Activated T-helper 1 cell treated with anti-CD3 and anti-CD28 coated beads, Interleukin-12 subunit alpha, Interleukin-12 subunit beta, Interleukin-2, Interleukin-4 antibody, amounts not matched to agents 30 ng/mL and 10 ng/mL and 1 ng/mL, durations not matched to agents 14 hours and 24 hours and 36 hours (primary cell): ENCODE measurements at regions of chr20 and their contacts with region 1.

Region 1: GRCh38 chr20:354298-355064 is 7.6 kb downstream of the NRSN2 start:
- DNase-seq: peak; percentile 77
- H3K4me3 Mint-ChIP-seq: no peak overlapping the region
- H3K27ac Mint-ChIP-seq: no peak overlapping the region
- H3K4me1 Mint-ChIP-seq: peaks cover 18% of the 10 kb centered on the region
- H3K27me3 Mint-ChIP-seq: no peaks in the 10 kb centered on the region

Region 2: DNA sequence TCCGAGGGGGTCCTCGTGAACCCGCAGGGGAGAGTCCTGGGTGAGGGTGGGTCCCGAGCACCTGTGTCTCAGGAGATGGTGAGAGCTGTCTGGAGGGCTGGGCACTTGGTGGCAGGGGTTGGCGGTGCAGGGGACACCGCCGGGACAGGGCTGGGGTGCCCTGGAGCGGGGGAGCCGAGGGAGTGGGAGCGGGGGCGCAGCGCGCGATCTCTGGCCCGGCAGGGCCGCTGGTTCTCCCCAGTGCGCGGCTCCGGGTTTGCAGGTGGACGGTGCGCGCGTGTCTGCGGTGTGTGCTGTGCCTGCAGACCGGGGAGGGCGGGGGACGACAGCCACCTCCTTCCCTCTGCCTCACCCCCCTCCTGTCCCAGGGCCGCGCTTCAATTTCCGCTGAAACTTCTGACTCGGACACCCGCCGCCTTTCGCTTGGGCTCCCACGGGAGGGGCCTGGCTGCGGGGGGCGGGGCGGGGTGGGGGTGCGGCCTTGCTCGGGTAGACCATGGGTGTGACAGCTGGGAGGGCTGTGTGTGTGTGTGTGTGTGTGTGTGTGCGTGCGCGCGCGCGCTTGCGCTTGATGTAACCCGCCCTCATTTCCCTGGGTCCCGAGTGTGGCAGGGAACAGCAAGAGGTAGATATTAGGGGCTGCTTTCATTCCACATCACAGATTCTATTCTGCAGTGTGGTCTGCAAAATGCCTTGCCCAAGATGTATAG is 27.3 kb after region 1 on chr20:
- intact Hi-C with region 1: loop called (anchors 1 kb)
- DNase-seq: peak; percentile 75
- H3K4me3 Mint-ChIP-seq: peak overlapping the region; percentile 81
- H3K27ac Mint-ChIP-seq: peak overlapping the region; percentile 68
- H3K4me1 Mint-ChIP-seq: peaks cover 22% of the 10 kb centered on the region
- H3K27me3 Mint-ChIP-seq: peaks cover 3% of the 10 kb centered on the region

Region 3: DNA sequence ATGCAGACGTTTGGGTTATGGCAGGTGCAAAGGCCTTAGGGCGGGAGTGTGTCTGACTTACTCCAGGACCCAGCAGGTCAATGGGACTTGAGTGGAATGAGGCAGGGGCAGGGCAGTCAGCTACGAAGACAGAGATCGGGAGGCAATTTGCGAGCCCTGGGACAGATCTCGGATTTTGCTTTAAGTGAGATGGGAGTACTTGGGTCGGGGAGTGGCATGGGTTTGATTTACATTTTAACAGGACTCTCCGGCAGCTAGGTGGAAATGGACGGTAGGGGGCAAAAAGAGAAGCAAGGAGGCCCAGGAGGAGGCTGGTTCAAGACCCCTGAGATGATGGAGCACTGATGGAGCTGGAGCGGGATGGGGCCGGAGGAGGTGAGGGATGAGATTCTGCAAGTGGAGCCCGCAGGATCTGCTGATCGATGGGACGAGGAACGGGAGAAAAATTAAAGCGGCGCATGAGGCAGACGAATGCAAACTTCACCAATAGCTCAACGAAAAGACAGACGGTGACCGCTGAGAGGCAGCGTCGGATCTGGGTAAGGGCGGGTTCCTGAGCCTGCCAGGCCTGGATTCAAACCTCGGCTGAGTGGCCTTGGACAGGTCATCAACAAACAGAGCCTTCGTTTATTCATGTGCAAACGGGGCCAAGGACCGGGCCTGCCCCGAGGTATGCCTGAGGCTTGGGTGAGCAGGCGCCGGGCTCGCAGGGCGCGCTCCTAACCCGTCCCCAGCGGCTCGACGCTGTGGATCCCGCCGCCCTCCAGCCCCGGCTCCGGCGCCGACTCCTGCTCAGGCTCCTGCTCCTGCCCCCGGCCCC is 52.9 kb after region 1 on chr20:
- intact Hi-C with region 1: loop called (anchors 1 kb)
- DNase-seq: peak; percentile 59
- H3K4me3 Mint-ChIP-seq: peak overlapping the region; percentile 86
- H3K27ac Mint-ChIP-seq: peak overlapping the region; percentile 95
- H3K4me1 Mint-ChIP-seq: peaks cover 47% of the 10 kb centered on the region
- H3K27me3 Mint-ChIP-seq: no peaks in the 10 kb centered on the region

Region 4: GRCh38 chr20:478949-479429 is 124.5 kb after region 1 on chr20:
- intact Hi-C with region 1: loop called (anchors 1 kb)
- DNase-seq: peak; percentile 25
- H3K4me3 Mint-ChIP-seq: no peak overlapping the region
- H3K27ac Mint-ChIP-seq: peak overlapping the region; percentile 69
- H3K4me1 Mint-ChIP-seq: peaks cover 33% of the 10 kb centered on the region
- H3K27me3 Mint-ChIP-seq: no peaks in the 10 kb centered on the region

Region 5: DNA sequence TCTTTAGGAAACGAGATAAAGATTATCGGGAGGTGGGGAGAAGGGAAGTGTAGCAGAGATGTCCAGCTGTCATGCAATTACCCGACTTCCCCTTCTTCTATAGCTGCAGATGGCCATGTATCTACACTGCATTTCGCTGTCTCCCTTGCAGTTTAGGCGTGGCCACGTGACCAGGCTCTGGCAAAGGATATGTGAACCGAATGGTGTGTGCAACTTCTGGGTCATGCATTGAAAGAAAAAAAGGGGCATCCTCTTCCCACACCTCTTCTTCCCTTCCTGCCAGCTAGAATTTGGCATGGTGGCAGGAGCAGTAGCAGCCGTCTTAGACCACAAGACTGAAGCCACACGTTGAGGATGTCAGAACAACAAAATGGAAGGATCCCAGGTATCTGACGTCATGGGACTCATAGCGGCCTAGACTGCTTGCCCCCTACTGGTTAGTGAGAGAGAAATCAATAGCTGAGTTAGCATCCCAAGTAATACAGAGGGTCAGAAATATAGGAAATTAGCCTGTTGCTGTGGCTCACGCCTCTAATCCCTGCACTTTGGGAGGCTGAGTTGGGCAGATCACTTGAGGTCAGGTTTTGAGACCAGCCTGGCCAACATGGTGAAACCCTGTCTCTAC is 222.8 kb after region 1 on chr20:
- intact Hi-C with region 1: no loop called
- DNase-seq: no peak
- H3K4me3 Mint-ChIP-seq: no peak overlapping the region
- H3K27ac Mint-ChIP-seq: no peak overlapping the region
- H3K4me1 Mint-ChIP-seq: no peaks in the 10 kb centered on the region
- H3K27me3 Mint-ChIP-seq: peaks cover 19% of the 10 kb centered on the region

Region 6: GRCh38 chr20:645318-646106 is 291.0 kb after region 1 on chr20:
- intact Hi-C with region 1: loop called (anchors 1 kb)
- DNase-seq: peak; percentile 63
- H3K4me3 Mint-ChIP-seq: no peak overlapping the region
- H3K27ac Mint-ChIP-seq: no peak overlapping the region
- H3K4me1 Mint-ChIP-seq: peaks cover 6% of the 10 kb centered on the region
- H3K27me3 Mint-ChIP-seq: peaks cover 19% of the 10 kb centered on the region

Region 7: DNA sequence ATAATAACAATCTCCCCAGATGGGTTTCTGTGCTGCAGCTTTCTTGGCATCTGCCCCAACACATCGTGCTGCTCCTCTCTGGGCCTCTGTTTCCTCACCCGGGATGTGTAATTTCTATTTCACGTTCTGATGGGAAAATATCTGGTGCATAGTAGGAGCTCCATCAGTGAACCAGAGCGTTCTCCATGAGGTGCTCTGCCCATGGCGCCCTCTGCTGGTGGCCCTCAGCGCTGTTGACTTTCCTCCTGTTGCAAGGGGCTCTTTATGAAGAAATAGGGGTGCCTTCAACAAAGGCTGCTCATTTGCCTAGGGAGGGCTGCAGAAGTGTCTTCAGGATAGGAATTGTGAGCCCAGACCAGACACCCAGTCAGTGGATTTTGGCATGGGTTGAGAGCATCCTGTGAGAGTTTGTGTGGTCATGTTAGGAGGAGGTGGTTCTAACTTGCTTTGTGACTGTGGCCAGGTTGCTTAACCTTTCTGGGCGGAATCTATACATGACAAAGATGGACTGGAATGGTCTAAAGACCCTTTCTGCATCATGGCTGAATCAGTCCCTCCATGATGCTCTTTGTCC is 313.0 kb after region 1 on chr20:
- intact Hi-C with region 1: loop called (anchors 1 kb)
- DNase-seq: peak; percentile 37
- H3K4me3 Mint-ChIP-seq: no peak overlapping the region
- H3K27ac Mint-ChIP-seq: no peak overlapping the region
- H3K4me1 Mint-ChIP-seq: peaks cover 7% of the 10 kb centered on the region
- H3K27me3 Mint-ChIP-seq: peaks cover 39% of the 10 kb centered on the region